ENCODE measurements at regions of chr7 and their contacts with region 1.

Region 1: DNA sequence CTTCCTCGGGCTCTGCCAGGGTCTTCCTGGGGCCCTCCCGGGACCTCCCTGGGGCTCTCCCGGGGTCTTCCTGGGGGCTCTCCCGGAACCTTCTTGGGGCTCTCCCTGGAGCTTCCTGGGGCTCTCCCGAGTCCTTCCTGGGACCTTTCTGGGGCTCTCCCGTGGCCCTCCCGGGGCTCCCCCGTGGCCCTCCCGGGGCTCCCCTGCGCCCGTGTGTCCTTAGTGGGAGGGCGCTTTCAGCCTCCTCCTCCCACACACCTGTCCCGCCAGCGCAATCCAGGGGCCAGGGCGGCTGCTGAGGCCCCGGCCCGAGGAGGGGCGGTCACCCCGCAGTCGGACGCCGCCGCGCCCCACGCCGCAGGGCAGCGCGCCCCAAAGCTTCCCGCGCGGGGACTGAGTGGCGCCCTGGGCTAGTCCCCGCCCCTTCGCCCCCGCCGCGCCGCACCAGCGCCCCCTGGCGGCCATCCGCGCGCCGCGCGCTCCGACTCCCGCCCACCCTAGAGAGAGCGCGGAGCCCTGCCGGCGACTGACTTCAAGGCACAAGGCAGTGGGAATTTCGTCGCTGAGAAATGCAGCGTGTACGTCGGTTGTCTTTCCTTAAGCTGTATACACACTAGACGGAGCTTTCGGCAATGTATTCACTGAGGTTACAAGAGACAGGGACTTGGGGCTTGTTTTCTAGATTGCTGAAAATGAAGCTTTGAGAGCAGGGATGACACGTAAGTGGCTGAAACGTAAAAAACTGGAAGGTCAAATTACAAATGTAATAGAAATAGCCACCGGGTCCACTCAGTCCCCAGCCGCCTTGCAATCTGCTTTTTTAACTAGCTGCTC is 47.1 kb downstream of the INSIG1 start:
- DNase-seq: peak; percentile 71 to 85 (median 79)
- H3K4me3 ChIP-seq: peak overlapping the region; percentile 3 to 54
- H3K4me3 Mint-ChIP-seq: peak overlapping the region in 7 of 8 donors; percentile 44 to 83 (median 77)
- H3K27ac ChIP-seq: no peak overlapping the region
- H3K27ac Mint-ChIP-seq: peak overlapping the region in 3 of 7 donors; percentile 43 to 86 (median 79)
- H3K4me1 ChIP-seq: peaks cover 13% of the 10 kb centered on the region
- H3K4me1 Mint-ChIP-seq: peaks cover 2 to 6% (median 4%) of the 10 kb centered on the region in 4 donors
- H3K27me3 ChIP-seq: peaks cover 4% of the 10 kb centered on the region
- H3K27me3 Mint-ChIP-seq: peaks cover 0 to 3% of the 10 kb centered on the region in 2 donors

Region 2: DNA sequence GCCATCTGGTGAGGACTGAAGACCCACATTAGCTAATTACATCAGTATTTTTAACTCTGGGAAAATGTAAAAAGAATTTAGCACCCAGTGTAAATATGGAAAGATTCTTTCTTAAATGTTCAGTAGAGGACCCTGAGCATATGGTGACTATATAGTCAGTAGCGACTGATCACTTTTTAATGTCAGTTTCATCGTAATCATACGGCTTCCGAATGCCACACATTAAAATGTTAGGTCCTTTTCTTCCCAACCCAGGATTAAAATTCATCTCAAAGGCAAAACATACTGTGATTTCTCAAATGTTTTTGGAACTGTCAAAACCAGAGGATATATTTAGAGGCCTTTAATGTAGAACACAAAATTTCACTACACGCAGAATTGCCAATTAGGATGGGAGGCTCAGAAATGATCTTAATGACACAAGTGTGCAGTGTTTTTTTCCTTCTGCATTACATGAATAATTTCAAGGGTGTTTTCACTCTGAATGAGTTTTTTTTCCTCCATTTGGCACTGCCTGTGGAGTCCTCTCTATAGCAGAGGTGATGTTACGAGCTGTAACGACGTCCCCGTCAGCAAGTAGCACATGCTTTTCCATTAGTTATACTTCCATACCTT is 724.6 kb before region 1 on chr7:
- CTCF ChIA-PET with region 1: no interaction called
- POLR2A ChIA-PET with region 1: no interaction called
- intact Hi-C with region 1: no loop called
- DNase-seq: no peak
- H3K4me3 ChIP-seq: no peak overlapping the region
- H3K4me3 Mint-ChIP-seq: no peak overlapping the region
- H3K27ac ChIP-seq: no peak overlapping the region
- H3K27ac Mint-ChIP-seq: no peak overlapping the region
- H3K4me1 ChIP-seq: no peaks in the 10 kb centered on the region
- H3K4me1 Mint-ChIP-seq: no peaks in the 10 kb centered on the region
- H3K27me3 ChIP-seq: no peaks in the 10 kb centered on the region
- H3K27me3 Mint-ChIP-seq: no peaks in the 10 kb centered on the region

Region 3: GRCh38 chr7:154729056-154729455 is 615.8 kb before region 1 on chr7:
- CTCF ChIA-PET with region 1: no interaction called
- POLR2A ChIA-PET with region 1: no interaction called
- intact Hi-C with region 1: no loop called
- DNase-seq: no peak
- H3K4me3 ChIP-seq: no peak overlapping the region
- H3K4me3 Mint-ChIP-seq: no peak overlapping the region
- H3K27ac ChIP-seq: no peak overlapping the region
- H3K27ac Mint-ChIP-seq: no peak overlapping the region
- H3K4me1 ChIP-seq: no peaks in the 10 kb centered on the region
- H3K4me1 Mint-ChIP-seq: no peaks in the 10 kb centered on the region
- H3K27me3 ChIP-seq: no peaks in the 10 kb centered on the region
- H3K27me3 Mint-ChIP-seq: no peaks in the 10 kb centered on the region

Region 4: GRCh38 chr7:155003376-155004214 is 341.2 kb before region 1 on chr7:
- CTCF ChIA-PET with region 1: interaction called, 3 read pairs
- POLR2A ChIA-PET with region 1: interaction called, 3 read pairs
- intact Hi-C with region 1: loop called (anchors 10 kb)
- DNase-seq: peak; percentile 80 to 92 (median 88)
- H3K4me3 ChIP-seq: peak overlapping the region; percentile 81 to 91
- H3K4me3 Mint-ChIP-seq: peak overlapping the region; percentile 93 to 97 (median 95)
- H3K27ac ChIP-seq: peak overlapping the region; percentile 84
- H3K27ac Mint-ChIP-seq: peak overlapping the region; percentile 38 to 96 (median 95)
- H3K4me1 ChIP-seq: peaks cover 19% of the 10 kb centered on the region
- H3K4me1 Mint-ChIP-seq: peaks cover 8 to 16% (median 12%) of the 10 kb centered on the region in 4 donors
- H3K27me3 ChIP-seq: no peaks in the 10 kb centered on the region
- H3K27me3 Mint-ChIP-seq: no peaks in the 10 kb centered on the region

Region 5: GRCh38 chr7:155195939-155196523 is 148.8 kb before region 1 on chr7:
- CTCF ChIA-PET with region 1: interaction called, 116 read pairs
- POLR2A ChIA-PET with region 1: interaction called, 4 read pairs
- intact Hi-C with region 1: no loop called
- DNase-seq: no peak
- H3K4me3 ChIP-seq: no peak overlapping the region
- H3K4me3 Mint-ChIP-seq: no peak overlapping the region
- H3K27ac ChIP-seq: no peak overlapping the region
- H3K27ac Mint-ChIP-seq: peak overlapping the region in 2 of 7 donors; percentile 47 to 68
- H3K4me1 ChIP-seq: no peaks in the 10 kb centered on the region
- H3K4me1 Mint-ChIP-seq: no peaks in the 10 kb centered on the region
- H3K27me3 ChIP-seq: no peaks in the 10 kb centered on the region
- H3K27me3 Mint-ChIP-seq: peaks cover 2 to 5% of the 10 kb centered on the region in 2 donors

Region 6: DNA sequence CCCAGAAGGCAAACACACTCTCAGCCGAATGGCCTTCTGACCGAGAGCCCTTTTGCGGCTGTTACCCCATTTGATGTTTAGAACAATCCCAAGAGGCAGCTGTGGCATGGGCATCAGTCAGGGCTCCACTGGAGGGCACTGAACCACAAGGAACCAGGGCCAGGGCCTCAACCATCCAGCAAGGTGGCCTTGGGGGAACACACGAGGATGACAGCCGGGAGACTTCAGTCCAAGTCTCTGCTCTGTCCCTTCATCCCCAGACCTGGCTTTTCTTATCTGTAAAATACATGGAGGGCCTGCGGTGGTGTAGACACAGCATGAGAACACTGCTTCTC is 110.7 kb before region 1 on chr7:
- CTCF ChIA-PET with region 1: interaction called, 6 read pairs
- POLR2A ChIA-PET with region 1: no interaction called
- intact Hi-C with region 1: loop called (anchors 1 kb)
- DNase-seq: no peak
- H3K4me3 ChIP-seq: no peak overlapping the region
- H3K4me3 Mint-ChIP-seq: no peak overlapping the region
- H3K27ac ChIP-seq: no peak overlapping the region
- H3K27ac Mint-ChIP-seq: no peak overlapping the region
- H3K4me1 ChIP-seq: no peaks in the 10 kb centered on the region
- H3K4me1 Mint-ChIP-seq: no peaks in the 10 kb centered on the region
- H3K27me3 ChIP-seq: no peaks in the 10 kb centered on the region
- H3K27me3 Mint-ChIP-seq: peaks cover 6 to 7% of the 10 kb centered on the region in 2 donors

Region 7: GRCh38 chr7:155298834-155299534 is 45.8 kb before region 1 on chr7:
- CTCF ChIA-PET with region 1: interaction called, 30 read pairs
- POLR2A ChIA-PET with region 1: interaction called, 41 read pairs
- intact Hi-C with region 1: loop called (anchors 1 kb)
- DNase-seq: peak; percentile 95 to 99 (median 98)
- H3K4me3 ChIP-seq: peak overlapping the region; percentile 67 to 68
- H3K4me3 Mint-ChIP-seq: peak overlapping the region; percentile 90 to 96 (median 93)
- H3K27ac ChIP-seq: peak overlapping the region; percentile 87
- H3K27ac Mint-ChIP-seq: peak overlapping the region; percentile 92 to 99 (median 96)
- H3K4me1 ChIP-seq: peaks cover 44% of the 10 kb centered on the region
- H3K4me1 Mint-ChIP-seq: peaks cover 29 to 50% (median 36%) of the 10 kb centered on the region in 4 donors
- H3K27me3 ChIP-seq: no peaks in the 10 kb centered on the region
- H3K27me3 Mint-ChIP-seq: no peaks in the 10 kb centered on the region

Region 8: GRCh38 chr7:155356323-155357105 is 11.7 kb after region 1 on chr7:
- CTCF ChIA-PET with region 1: interaction called, 14 read pairs
- POLR2A ChIA-PET with region 1: no interaction called
- intact Hi-C with region 1: no loop called
- DNase-seq: no peak
- H3K4me3 ChIP-seq: no peak overlapping the region
- H3K4me3 Mint-ChIP-seq: no peak overlapping the region
- H3K27ac ChIP-seq: no peak overlapping the region
- H3K27ac Mint-ChIP-seq: no peak overlapping the region
- H3K4me1 ChIP-seq: no peaks in the 10 kb centered on the region
- H3K4me1 Mint-ChIP-seq: peaks cover 0 to 2% (median 0%) of the 10 kb centered on the region in 4 donors
- H3K27me3 ChIP-seq: no peaks in the 10 kb centered on the region
- H3K27me3 Mint-ChIP-seq: peaks cover 23 to 25% of the 10 kb centered on the region in 2 donors